Heart left ventricle (tissue), 16 donors: ENCODE measurements at regions of chr2 and their contacts with region 1.

Region 1: DNA sequence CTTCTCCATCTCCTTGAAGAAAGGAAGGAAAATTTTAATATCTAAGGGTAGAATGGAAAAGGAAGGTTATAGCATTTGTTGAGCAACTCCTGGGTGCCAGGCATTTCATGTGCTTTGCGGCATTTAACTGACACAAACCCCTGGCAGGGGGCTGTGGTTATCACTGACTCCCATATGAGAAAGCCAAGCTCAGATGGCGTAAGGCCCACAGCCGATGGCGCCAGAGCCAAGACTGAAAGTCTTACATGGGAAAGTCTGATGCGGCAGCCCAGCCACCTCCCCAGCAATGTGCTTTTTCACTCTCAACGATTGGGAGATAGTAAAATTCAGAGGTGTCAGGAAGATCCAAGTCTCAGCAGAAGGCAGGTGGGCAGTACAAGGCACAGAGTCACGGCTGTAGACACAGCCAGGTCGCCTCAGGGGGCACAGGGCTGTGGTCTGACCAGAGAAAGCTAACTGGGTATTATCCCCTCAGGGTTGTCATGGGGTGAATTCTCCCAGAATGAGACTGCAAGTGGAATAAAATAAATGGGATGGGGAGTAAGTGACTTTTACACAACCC is 324.2 kb upstream of the NCKAP5 start:
- DNase-seq: no peak
- ATAC-seq: no peak
- H3K4me3 ChIP-seq: no peak overlapping the region
- H3K27ac ChIP-seq: no peak overlapping the region
- H3K4me1 ChIP-seq: peaks cover 0 to 3% (median 0%) of the 10 kb centered on the region in 12 donors
- H3K27me3 ChIP-seq: no peaks in the 10 kb centered on the region
- CTCF ChIP-seq: no peak
- POLR2A ChIP-seq: no peak

Region 2: DNA sequence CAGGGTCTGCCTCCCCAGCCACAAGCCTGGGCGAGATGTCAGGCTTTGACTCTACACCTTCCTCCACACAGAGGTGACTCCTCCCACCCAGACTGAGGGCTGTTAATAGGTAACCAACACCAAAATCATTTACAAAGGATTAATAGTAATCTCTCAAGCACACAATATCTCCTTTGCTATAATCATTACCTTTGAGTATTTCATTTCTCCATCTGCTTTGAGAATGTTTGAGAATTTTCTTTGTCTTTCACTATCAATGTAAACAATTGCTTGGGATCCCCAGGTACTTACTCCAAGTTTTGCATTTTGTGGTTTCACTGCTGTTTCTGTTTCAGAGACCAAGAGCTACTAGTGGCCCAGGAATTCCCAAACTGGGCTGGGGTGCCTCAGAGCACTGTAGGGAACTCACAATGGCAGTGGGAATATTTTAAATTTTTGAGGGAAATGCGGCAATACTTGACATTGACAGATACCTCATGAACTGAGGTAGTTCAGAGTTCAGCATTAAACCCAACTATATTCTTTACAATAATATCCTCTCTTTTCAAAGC is 195.0 kb after region 1 on chr2:
- intact Hi-C with region 1: loop called in 1 of 10 experiments (anchors 10 kb)
- DNase-seq: no peak
- ATAC-seq: peak in 2 of 4 donors; percentile 12 to 14
- H3K4me3 ChIP-seq: no peak overlapping the region
- H3K27ac ChIP-seq: peak overlapping the region in 2 of 12 donors; percentile 35 to 39
- H3K4me1 ChIP-seq: peaks cover 0 to 11% (median 0%) of the 10 kb centered on the region in 12 donors
- H3K27me3 ChIP-seq: no peaks in the 10 kb centered on the region
- CTCF ChIP-seq: no peak
- POLR2A ChIP-seq: no peak